Activated CD4-positive, alpha-beta memory T cell treated with anti-CD3 and anti-CD28 coated beads for 36 hours (primary cell): ENCODE measurements at regions of chr6 and their contacts with region 1.

Region 1: GRCh38 chr6:167898673-167899311 is 72.1 kb downstream of the AFDN start:
- DNase-seq: no peak
- H3K4me3 Mint-ChIP-seq: no peak overlapping the region
- H3K27ac Mint-ChIP-seq: no peak overlapping the region
- H3K4me1 Mint-ChIP-seq: no peaks in the 10 kb centered on the region
- H3K27me3 Mint-ChIP-seq: no peaks in the 10 kb centered on the region

Region 2: GRCh38 chr6:167219967-167220512 is 678.8 kb before region 1 on chr6:
- CTCF ChIA-PET with region 1: no interaction called
- POLR2A ChIA-PET with region 1: no interaction called
- intact Hi-C with region 1: loop called (anchors 5 kb)
- DNase-seq: no peak
- H3K4me3 Mint-ChIP-seq: no peak overlapping the region
- H3K27ac Mint-ChIP-seq: no peak overlapping the region
- H3K4me1 Mint-ChIP-seq: no peaks in the 10 kb centered on the region
- H3K27me3 Mint-ChIP-seq: no peaks in the 10 kb centered on the region

Region 3: DNA sequence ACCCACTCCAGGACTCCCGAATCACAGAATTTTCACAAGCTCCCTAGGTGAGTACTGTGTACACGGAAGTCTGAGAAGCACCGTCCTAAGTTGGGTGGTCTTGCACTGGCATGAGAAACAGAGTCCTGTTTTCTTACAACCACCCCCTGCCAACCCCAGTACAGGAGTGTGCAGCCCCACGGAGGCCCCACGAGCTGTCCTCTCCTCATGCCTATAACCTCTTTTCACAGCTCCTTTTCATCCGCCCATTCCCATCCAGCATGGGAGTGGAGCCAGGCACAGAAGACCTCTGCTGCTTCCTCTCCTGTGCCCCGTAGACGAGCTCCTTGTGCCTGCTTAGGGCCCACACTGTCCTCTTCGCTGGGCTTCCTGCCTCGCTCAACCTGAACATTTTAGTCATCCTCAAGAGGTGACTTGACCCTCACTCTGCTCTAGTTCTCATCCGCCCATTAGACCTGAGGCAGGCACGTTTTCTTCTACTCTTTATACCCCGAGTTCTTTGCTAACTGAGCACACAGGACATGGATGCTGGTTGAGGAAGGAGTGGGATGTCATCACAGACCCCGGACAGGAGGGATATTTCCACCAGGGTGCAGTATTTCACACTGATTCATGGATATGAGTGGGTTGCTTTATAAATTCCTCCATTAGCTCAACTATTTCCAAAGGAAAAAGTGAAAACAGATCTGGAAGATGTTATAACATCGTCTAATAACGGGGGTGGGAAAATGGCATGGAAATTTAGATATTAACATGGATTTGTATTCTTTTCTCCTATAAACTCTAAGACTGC is 413.4 kb before region 1 on chr6:
- CTCF ChIA-PET with region 1: interaction called, 6 read pairs
- POLR2A ChIA-PET with region 1: no interaction called
- intact Hi-C with region 1: loop called (anchors 10 kb)
- DNase-seq: no peak
- H3K4me3 Mint-ChIP-seq: no peak overlapping the region
- H3K27ac Mint-ChIP-seq: no peak overlapping the region
- H3K4me1 Mint-ChIP-seq: no peaks in the 10 kb centered on the region
- H3K27me3 Mint-ChIP-seq: peaks cover 34% of the 10 kb centered on the region

Region 4: DNA sequence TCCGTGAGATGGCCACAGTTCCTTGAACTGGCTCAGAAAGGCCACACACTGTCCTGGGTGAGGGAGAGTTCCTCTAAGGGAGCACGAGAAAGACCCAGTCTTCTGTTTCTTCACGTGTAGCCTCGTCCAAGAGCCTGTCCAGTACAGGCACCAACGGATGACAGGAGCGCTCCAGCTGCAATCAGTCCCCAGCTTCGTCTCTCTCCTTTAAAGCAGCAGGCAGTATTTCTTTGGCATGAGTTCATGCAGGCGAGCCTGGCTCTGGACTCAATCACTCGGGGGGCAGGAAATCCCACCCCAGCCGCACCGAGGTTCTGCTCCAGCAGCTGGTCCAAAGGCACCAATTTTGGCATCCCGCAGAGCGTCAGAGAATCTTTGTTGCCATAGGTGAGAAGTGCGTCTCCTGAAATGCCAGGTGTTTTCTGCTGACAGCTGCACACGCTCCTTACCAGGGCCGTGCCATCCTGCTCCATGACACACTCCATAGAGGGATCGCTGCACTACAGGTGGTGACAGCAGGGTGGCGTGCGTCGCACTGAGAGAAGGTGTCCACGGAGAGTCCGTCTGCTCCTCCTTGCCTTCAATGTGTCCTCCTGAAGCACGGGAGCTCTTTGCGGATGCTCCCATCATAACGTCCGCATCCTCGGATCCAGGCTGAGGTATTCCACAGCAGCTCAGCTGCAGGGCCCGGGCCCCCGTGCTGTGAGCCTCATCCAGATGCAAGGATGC is 131.6 kb before region 1 on chr6:
- CTCF ChIA-PET with region 1: no interaction called
- POLR2A ChIA-PET with region 1: no interaction called
- intact Hi-C with region 1: no loop called
- DNase-seq: no peak
- H3K4me3 Mint-ChIP-seq: no peak overlapping the region
- H3K27ac Mint-ChIP-seq: no peak overlapping the region
- H3K4me1 Mint-ChIP-seq: no peaks in the 10 kb centered on the region
- H3K27me3 Mint-ChIP-seq: peaks cover 8% of the 10 kb centered on the region

Region 5: DNA sequence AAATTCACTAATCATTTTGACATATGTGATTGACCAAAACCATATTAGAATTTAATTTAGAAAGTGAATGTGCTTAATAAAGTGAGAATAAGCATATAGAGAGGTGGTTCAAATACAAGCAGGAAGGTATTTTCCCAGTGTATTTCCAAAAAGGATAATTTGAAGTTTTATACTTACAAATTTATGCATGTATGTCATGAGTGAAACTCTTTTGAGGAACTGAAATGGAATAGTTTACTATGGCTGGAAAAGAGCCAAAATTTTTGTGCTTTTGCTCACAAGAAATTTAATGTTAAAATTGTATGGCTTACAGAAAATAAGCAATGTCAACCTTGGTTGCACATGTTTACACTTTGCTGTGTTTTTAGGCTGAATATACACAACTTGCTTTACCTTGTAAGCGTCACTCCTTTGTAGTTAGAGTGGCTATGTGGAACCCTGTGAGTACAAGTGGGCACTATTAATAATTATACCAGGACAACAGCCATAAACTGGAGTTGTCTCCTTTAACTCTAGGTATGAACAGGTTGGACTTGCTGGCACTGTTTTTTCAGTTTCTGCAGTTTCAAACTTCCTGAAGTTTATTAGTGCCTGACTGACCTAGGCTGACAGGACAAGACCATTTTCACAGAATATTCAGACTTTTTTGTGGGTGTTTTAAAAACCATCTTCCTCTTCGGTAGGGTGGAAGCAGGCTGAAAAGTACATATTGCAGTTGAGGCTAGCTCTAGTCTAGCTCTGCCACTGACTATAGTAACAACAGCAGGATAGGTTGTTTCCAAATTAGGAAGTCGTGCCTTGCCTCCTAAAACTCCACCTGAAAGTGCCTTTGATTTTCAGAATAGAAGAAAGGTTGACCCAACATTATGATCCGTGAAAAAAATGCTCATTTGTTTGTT is 66.0 kb before region 1 on chr6:
- CTCF ChIA-PET with region 1: no interaction called
- POLR2A ChIA-PET with region 1: no interaction called
- intact Hi-C with region 1: loop called (anchors 5 kb)
- DNase-seq: no peak
- H3K4me3 Mint-ChIP-seq: peak overlapping the region; percentile 18
- H3K27ac Mint-ChIP-seq: peak overlapping the region; percentile 25
- H3K4me1 Mint-ChIP-seq: peaks cover 50% of the 10 kb centered on the region
- H3K27me3 Mint-ChIP-seq: peaks cover 43% of the 10 kb centered on the region

Region 6: GRCh38 chr6:167951781-167952511 is 53.2 kb after region 1 on chr6:
- CTCF ChIA-PET with region 1: no interaction called
- POLR2A ChIA-PET with region 1: no interaction called
- intact Hi-C with region 1: no loop called
- DNase-seq: no peak
- H3K4me3 Mint-ChIP-seq: no peak overlapping the region
- H3K27ac Mint-ChIP-seq: no peak overlapping the region
- H3K4me1 Mint-ChIP-seq: peaks cover 4% of the 10 kb centered on the region
- H3K27me3 Mint-ChIP-seq: no peaks in the 10 kb centered on the region